GM18951 (cell line): ENCODE measurements at regions of chr6 and their contacts with region 1.

Region 1: DNA sequence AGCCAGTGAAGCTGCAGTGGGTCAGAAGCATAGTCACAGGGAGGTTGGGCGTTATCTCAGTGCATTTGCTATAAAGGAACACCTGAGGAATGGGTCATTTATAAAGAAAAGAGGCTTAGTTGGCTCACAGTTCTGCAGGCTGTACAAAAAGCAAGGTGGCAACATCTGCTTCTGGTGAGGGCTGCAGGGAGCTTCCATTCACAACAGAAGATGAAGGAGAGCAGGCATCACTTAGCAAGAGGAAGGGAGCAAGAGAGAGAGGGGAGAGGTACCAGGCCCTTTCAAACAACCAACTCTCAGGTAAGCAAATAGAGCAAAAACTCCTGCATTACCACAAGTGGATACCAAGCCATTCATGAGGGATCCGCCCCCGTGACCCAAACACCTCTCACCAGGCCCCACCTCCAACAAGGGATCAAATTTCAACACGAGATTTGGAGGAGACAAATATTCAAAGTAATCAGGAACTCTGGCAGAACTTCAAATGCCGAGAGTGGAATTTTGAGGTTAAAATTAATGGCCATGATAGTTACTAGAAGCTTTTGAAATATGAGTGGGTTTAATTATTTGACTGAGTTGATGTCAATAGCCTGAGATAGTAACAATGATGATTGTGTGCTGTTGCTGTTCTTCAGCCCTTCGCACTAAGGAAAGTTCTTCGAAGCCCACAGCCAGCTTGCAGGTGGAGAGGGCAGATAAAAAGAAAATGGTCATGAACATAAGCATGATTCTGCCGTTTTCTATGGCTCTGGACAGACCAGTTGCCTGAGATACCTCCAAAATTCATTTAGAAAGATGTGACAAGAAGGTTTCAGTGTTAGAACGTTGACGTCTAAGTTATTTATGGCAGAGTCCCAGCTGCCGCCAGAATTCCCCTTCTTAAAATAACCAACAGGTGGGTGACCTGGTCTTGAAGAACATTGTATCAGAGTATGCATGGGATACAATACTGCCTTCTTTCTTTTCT is 55.3 kb upstream of the ADTRP start:
- POLR2A ChIP-seq: no peak

Region 2: DNA sequence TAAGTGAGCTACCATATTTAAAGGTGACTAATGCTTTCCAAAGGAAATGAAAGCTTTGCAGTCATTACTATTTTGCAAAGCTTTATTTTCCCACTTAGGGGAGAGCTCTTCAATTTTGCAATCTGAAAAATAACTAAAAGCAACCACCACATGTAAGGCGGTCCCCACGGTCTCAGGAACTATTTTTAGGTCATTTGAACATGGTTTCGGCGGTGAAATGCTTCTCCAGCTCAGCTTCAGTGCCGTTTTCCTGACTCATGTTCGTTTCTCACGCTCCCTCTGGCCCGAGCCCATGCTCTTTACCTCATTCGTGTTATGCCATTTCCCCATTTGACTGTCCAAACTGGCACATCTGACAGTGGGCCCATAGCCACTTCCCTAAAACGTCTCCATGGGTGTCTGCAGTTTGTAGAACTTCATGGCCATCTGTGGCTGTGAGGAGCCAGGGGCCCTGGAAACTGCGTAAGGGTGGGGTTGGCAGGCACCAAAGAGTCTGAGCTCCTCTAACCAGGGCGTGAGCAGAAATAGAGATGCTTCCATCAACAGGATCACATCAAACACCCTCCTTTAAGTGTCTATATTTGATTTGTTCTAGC is 101.8 kb before region 1 on chr6:
- in situ Hi-C with region 1: loop called (anchors 10 kb)
- POLR2A ChIP-seq: no peak

Region 3: GRCh38 chr6:12494161-12494560 is 660.3 kb after region 1 on chr6:
- in situ Hi-C with region 1: no loop called
- POLR2A ChIP-seq: no peak